ENCODE measurements at regions of chr3 and their contacts with region 1.

Region 1: GRCh38 chr3:196979545-196979944 is 10.9 kb upstream of the PIGZ start:
- DNase-seq: no peak
- H3K4me3 ChIP-seq: no peak overlapping the region
- H3K27ac ChIP-seq: no peak overlapping the region
- H3K4me1 ChIP-seq: no peaks in the 10 kb centered on the region
- H3K27me3 ChIP-seq: no peaks in the 10 kb centered on the region
- CTCF ChIP-seq: no peak
- POLR2A ChIP-seq: no peak

Region 2: DNA sequence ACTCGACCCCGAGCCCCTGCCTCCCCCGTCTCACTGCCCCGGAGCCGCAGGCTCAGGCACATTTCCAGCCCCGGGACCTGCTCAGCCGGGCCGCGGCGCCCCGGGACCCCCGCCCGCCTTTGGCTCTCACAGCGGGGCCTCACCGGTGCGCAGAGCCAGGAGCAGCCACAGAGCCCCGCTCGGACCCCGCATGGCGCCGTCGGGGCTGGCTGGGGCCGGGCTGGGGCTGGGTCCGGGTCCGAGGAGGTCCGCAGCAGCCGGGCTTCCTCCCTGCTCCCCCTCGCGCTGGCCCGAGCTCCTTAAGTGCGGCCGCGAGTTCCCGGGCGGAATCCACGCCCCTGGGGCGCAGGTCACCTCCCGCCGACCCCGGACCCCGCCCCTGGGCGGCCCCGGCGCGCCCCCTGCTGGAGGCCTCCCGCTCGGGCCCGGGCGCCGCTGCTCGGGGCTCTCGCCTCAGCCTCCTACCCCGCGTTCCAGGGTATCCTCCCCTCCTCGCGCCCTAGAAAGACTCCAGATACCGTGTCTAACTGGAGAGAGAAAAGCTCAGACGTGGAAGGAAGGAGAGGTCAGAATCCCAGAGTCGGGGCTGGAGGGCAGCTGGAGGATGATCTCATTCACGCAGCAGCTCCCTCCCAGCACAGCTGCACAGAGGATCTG is 50.1 kb after region 1 on chr3 and contains the start of gene MELTF:
- intact Hi-C with region 1: loop called (anchors 2 kb)
- DNase-seq: peak; percentile 58 to 60
- H3K4me3 ChIP-seq: peak within 1 kb of the TSS in 2 of 3 donors; percentile 39 to 71
- H3K27ac ChIP-seq: peak within 1 kb of the TSS in 1 of 3 donors; percentile 44
- H3K4me1 ChIP-seq: peaks cover 9 to 26% of the 10 kb centered on the region in 2 donors
- H3K27me3 ChIP-seq: no peaks in the 10 kb centered on the region
- CTCF ChIP-seq: peak in 5 of 6 experiments; percentile 31 to 92 (median 71)
- POLR2A ChIP-seq: no peak
- total RNA-seq, gene MELTF: 2.7 to 13.8 (median 4.3) TPM

Region 3: DNA sequence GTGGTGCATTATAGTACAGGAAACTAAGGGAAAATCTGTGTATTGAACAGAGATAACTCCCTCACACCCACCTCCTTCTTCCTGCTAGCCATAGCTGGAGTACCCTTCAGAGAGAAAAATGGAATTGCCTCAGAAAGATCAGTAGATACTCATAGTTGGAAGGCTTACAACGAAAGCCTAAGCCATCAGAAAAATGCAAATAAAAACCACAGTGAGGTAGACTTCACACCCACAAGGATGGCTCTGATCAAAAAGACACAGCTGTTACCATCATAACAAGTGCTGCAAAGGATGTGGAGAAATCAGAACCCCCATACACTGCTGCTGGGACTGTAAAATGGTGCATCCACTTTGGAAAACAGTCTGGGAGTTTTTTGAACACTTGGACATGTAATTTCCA is 326.3 kb after region 1 on chr3:
- intact Hi-C with region 1: no loop called
- DNase-seq: no peak
- H3K4me3 ChIP-seq: no peak overlapping the region
- H3K27ac ChIP-seq: no peak overlapping the region
- H3K4me1 ChIP-seq: peaks cover 16 to 22% of the 10 kb centered on the region in 2 donors
- H3K27me3 ChIP-seq: no peaks in the 10 kb centered on the region
- CTCF ChIP-seq: no peak
- POLR2A ChIP-seq: no peak

Region 4: DNA sequence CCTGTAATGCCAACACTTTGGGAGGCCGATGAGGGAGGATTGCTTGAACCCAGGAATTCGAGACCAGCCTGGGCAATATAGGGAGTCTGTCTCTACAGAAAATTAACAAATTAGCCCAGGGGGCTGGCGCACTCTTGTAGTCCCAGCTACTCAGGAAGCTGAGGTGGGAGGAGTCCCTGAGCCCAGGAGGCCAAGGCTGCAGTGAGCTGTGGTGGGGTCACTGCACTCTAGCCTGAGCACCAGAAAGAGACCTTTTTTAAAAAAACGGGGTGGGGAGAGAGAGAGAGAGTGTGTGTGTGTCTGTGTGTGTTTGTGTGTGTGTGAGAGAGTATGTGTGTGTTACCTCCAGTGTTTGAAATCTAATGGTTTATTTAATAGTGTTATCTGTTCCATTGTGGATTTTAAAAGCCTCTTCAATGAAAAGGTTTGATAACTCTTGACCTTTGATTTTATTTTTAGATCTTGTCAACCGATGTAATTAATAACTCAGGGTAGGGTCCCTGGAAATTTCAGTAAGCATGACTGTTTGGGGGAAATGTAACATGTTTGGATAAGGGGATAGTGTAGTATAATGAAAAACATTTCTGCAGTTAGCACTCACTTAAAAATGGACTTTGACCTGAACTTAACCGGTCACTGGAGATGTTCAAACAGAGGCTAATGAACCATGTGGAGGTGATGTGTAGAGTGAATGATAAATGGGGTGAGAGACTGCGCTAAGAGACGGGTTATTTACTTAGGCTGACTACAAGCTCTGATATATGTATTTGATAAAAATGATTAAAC is 841.2 kb after region 1 on chr3:
- intact Hi-C with region 1: no loop called
- DNase-seq: no peak
- H3K4me3 ChIP-seq: no peak overlapping the region
- H3K27ac ChIP-seq: no peak overlapping the region
- H3K4me1 ChIP-seq: no peaks in the 10 kb centered on the region
- H3K27me3 ChIP-seq: no peaks in the 10 kb centered on the region
- CTCF ChIP-seq: no peak
- POLR2A ChIP-seq: no peak

Measured in thyroid gland (tissue), 4 donors.